ENCODE measurements at regions of chr12 and their contacts with region 1.

Region 1: GRCh38 chr12:44774815-44775411 is 101.2 kb downstream of the NELL2 start:
- DNase-seq: peak; percentile 83
- ATAC-seq: peak; percentile 81
- H3K4me3 Mint-ChIP-seq: no peak overlapping the region
- H3K27ac Mint-ChIP-seq: no peak overlapping the region
- H3K4me1 Mint-ChIP-seq: peaks cover 19% of the 10 kb centered on the region
- H3K27me3 Mint-ChIP-seq: no peaks in the 10 kb centered on the region
- CTCF ChIP-seq: peak; percentile 84

Region 2: DNA sequence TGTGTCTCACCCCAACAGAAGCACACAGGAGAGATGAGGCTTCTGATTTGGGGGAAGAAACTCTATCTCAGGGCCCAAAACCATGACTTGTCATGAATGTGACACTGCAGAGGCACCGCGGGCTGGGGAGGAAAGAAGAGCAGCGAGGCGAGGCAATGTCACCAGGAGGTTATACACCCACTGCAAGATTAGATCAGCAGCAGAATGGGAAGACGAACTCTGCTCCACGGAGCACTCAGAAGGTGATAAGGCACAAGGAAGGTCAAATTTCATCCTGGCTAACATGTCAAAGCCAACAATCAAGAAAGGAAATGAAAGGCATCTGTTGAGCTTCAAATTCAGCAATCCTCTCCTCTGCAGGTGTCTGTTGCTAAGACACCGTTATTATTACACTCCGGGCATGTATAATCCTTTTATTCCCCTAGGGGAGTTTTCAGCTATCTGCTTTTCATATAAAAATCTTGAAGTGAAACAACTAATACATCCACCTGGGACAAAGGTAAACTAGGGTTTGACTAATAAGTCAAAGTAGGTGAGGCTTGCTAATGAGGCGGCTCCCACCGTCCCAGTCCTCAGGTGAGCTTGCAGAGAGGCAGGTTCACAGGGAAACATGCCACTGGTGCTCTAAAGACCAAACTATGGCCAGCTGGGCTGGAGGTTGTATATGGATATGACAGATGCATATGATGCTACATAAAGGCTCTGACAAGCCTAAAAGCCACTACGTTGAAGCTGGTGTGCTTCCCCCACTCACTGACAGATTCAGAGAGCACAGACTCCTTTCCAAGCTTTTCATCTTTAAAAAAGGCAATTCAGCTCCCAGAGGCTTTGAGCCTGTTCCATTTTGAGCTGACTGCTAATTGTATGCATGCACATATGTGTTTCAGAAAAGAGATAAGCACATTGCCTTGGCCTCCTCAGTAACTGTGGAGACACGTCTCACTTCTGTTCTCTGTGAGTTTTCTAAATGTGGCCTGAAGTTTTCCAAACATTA is 120.0 kb before region 1 on chr12:
- CTCF ChIA-PET with region 1: no interaction called
- POLR2A ChIA-PET with region 1: no interaction called
- DNase-seq: no peak
- ATAC-seq: peak; percentile 43
- H3K4me3 Mint-ChIP-seq: no peak overlapping the region; the same call in 1 of the 2 replicates
- H3K27ac Mint-ChIP-seq: peak overlapping the region; percentile 38
- H3K4me1 Mint-ChIP-seq: peaks cover 25% of the 10 kb centered on the region
- H3K27me3 Mint-ChIP-seq: no peaks in the 10 kb centered on the region; the same call in 1 of the 2 replicates
- CTCF ChIP-seq: no peak

Region 3: DNA sequence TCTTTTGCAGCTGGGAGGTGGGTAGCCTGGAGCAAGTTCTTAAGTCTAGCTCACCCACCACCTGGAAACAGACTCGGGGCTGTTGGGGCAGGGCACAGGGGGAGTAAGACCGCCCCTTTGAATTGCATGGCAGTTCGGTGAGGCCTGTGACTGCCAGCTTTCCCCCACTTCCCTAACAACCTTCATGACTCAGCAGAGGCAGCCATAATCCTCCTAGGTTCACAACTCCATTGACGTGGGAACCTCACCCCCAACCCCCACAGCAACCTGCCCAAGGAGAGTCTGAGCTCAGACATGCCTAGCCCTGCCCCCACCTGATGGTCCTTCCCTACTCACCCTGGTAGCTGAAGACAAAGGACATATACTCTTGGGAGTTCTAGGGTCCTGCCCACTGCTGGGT is 13.8 kb after region 1 on chr12:
- CTCF ChIA-PET with region 1: interaction called, 14 read pairs
- POLR2A ChIA-PET with region 1: no interaction called
- DNase-seq: no peak
- ATAC-seq: no peak
- H3K4me3 Mint-ChIP-seq: no peak overlapping the region
- H3K27ac Mint-ChIP-seq: no peak overlapping the region
- H3K4me1 Mint-ChIP-seq: peaks cover 21% of the 10 kb centered on the region
- H3K27me3 Mint-ChIP-seq: no peaks in the 10 kb centered on the region
- CTCF ChIP-seq: no peak

Region 4: GRCh38 chr12:44875954-44876553 is 101.1 kb after region 1 on chr12 and contains the start of gene NELL2:
- CTCF ChIA-PET with region 1: interaction called, 23 read pairs
- POLR2A ChIA-PET with region 1: no interaction called
- DNase-seq: peak; percentile 84
- ATAC-seq: peak; percentile 83
- H3K4me3 Mint-ChIP-seq: peak within 1 kb of the TSS; percentile 99
- H3K27ac Mint-ChIP-seq: peak within 1 kb of the TSS; percentile 87
- H3K4me1 Mint-ChIP-seq: peaks cover 20% of the 10 kb centered on the region
- H3K27me3 Mint-ChIP-seq: peaks cover 14% of the 10 kb centered on the region; the same call in 1 of the 2 replicates
- CTCF ChIP-seq: no peak
- total RNA-seq, gene NELL2: 37.4 to 49.9 TPM (median 45.8 TPM) in 3 replicates

Region 5: GRCh38 chr12:44930972-44931600 is 156.2 kb after region 1 on chr12:
- CTCF ChIA-PET with region 1: interaction called, 10 read pairs
- POLR2A ChIA-PET with region 1: no interaction called
- DNase-seq: no peak
- ATAC-seq: peak; percentile 60
- H3K4me3 Mint-ChIP-seq: no peak overlapping the region
- H3K27ac Mint-ChIP-seq: no peak overlapping the region
- H3K4me1 Mint-ChIP-seq: no peaks in the 10 kb centered on the region
- H3K27me3 Mint-ChIP-seq: peaks cover 3% of the 10 kb centered on the region; the same call in 1 of the 2 replicates
- CTCF ChIP-seq: peak; percentile 43; the same call in 1 of the 2 replicates

Region 6: GRCh38 chr12:45122768-45123380 is 348.0 kb after region 1 on chr12:
- CTCF ChIA-PET with region 1: interaction called, 10 read pairs
- POLR2A ChIA-PET with region 1: no interaction called
- DNase-seq: peak; percentile 22
- ATAC-seq: peak; percentile 67
- H3K4me3 Mint-ChIP-seq: no peak overlapping the region
- H3K27ac Mint-ChIP-seq: no peak overlapping the region
- H3K4me1 Mint-ChIP-seq: peaks cover 13% of the 10 kb centered on the region
- H3K27me3 Mint-ChIP-seq: no peaks in the 10 kb centered on the region
- CTCF ChIP-seq: no peak

Measured in WTC11 (cell line).